SK-N-SH (cell line): ENCODE measurements at regions of chr1 and their contacts with region 1.

Region 1: DNA sequence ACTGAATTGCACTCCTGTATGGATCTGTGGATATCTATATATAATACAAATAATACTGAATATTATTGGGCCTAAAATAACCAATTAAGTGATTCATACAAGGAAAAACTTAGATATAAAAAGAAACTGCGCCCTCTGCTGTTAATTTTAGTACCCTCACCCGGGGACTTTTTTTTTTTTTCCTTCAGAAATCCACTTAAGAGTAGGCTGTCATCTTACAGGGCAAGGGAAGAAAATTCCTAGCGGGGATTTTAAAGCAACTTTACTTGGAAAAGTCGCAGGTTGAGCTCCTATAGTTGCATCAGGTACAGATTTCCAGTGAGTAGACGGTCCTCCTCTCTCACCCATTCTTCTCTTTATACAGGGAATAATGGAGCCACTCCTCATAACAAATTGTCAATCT is 1.3 kb downstream of the NTNG1 start:
- DNase-seq: peak; percentile 29
- H3K4me3 ChIP-seq: peak overlapping the region; percentile 45 to 66; a peak in 3 of 4 replicates
- H3K27ac ChIP-seq: no peak overlapping the region
- H3K4me1 ChIP-seq: peaks cover 0 to 13% of the 10 kb centered on the region in 2 experiments; a peak in 2 of 4 replicates
- H3K27me3 ChIP-seq: peaks cover 11% of the 10 kb centered on the region; the same call in 1 of the 2 replicates
- CTCF ChIP-seq: peak; percentile 86
- EP300 ChIP-seq: no peak
- RAD21 ChIP-seq: peak; percentile 67

Region 2: DNA sequence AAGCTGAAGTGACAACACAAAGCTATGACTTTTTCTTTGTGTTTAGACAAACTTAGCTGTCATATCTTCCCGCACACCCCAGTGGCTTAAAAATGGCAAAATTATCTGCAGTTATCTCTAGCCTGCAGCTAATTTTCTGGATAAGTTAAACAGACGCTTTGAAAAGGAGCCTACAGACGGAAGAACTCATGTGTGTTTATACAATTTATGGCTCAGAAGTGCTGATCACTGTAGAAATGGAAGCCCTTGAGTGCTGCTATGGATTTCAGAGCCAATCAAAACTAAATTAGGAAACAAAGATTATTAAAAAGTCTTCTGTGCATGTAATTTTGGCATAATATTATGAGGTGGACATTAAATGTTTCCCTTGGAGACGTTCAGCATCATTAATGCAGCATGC is 10.3 kb after region 1 on chr1:
- CTCF ChIA-PET with region 1: interaction called, 14 read pairs
- POLR2A ChIA-PET with region 1: no interaction called
- DNase-seq: peak; percentile 9
- H3K4me3 ChIP-seq: no peak overlapping the region
- H3K27ac ChIP-seq: no peak overlapping the region; a peak in 1 of 4 replicates
- H3K4me1 ChIP-seq: peaks cover 0 to 3% of the 10 kb centered on the region in 2 experiments; a peak in 3 of 4 replicates
- H3K27me3 ChIP-seq: no peaks in the 10 kb centered on the region
- CTCF ChIP-seq: no peak
- EP300 ChIP-seq: peak in 1 of 2 experiments; percentile 75; a peak in 2 of 4 replicates
- RAD21 ChIP-seq: no peak